K562 (cell line): ENCODE measurements at regions of chr1 and their contacts with region 1.

Region 1: GRCh38 chr1:207499573-207499972 is 3.6 kb downstream of the CR1 start:
- DNase-seq: peak; percentile 70 to 91 (median 76)
- ATAC-seq: peak; percentile 90
- H3K4me3 ChIP-seq: no peak overlapping the region
- H3K27ac ChIP-seq: peak overlapping the region; percentile 20; the same call in 1 of the 3 replicates
- H3K4me1 ChIP-seq: peaks cover 10 to 23% of the 10 kb centered on the region in 2 experiments
- H3K27me3 ChIP-seq: no peaks in the 10 kb centered on the region
- CTCF ChIP-seq: peak; percentile 86 to 97 (median 88)
- EP300 ChIP-seq: no peak; the same call in 1 of the 2 replicates
- POLR2A ChIP-seq: no peak
- RAD21 ChIP-seq: peak; percentile 96 to 98

Region 2: GRCh38 chr1:206912445-206913095 is 587.0 kb before region 1 on chr1:
- CTCF ChIA-PET with region 1: interaction called, 7 read pairs
- POLR2A ChIA-PET with region 1: no interaction called
- in situ Hi-C with region 1: no loop called
- intact Hi-C with region 1: loop called (anchors 5 kb)
- DNase-seq: peak; percentile 81 to 89 (median 84)
- ATAC-seq: peak; percentile 81
- H3K4me3 ChIP-seq: no peak overlapping the region
- H3K27ac ChIP-seq: no peak overlapping the region
- H3K4me1 ChIP-seq: peaks cover 4 to 12% of the 10 kb centered on the region in 2 experiments; a peak in 3 of 5 replicates
- H3K27me3 ChIP-seq: peaks cover 45 to 63% of the 10 kb centered on the region in 2 experiments
- CTCF ChIP-seq: peak; percentile 90 to 92 (median 92)
- EP300 ChIP-seq: no peak
- POLR2A ChIP-seq: no peak
- RAD21 ChIP-seq: peak; percentile 87 to 94

Region 3: GRCh38 chr1:207084701-207085180 is 414.8 kb before region 1 on chr1:
- CTCF ChIA-PET with region 1: interaction called, 5 read pairs
- POLR2A ChIA-PET with region 1: no interaction called
- in situ Hi-C with region 1: no loop called
- intact Hi-C with region 1: loop called (anchors 1 kb)
- DNase-seq: peak; percentile 77 to 95 (median 86)
- ATAC-seq: peak; percentile 98
- H3K4me3 ChIP-seq: no peak overlapping the region
- H3K27ac ChIP-seq: peak overlapping the region; percentile 20; the same call in 2 of the 3 replicates
- H3K4me1 ChIP-seq: peaks cover 0 to 15% of the 10 kb centered on the region in 2 experiments; a peak in 4 of 5 replicates
- H3K27me3 ChIP-seq: no peaks in the 10 kb centered on the region
- CTCF ChIP-seq: peak; percentile 86 to 87 (median 87)
- EP300 ChIP-seq: peak; percentile 75
- POLR2A ChIP-seq: no peak
- RAD21 ChIP-seq: peak; percentile 98 to 99

Region 4: DNA sequence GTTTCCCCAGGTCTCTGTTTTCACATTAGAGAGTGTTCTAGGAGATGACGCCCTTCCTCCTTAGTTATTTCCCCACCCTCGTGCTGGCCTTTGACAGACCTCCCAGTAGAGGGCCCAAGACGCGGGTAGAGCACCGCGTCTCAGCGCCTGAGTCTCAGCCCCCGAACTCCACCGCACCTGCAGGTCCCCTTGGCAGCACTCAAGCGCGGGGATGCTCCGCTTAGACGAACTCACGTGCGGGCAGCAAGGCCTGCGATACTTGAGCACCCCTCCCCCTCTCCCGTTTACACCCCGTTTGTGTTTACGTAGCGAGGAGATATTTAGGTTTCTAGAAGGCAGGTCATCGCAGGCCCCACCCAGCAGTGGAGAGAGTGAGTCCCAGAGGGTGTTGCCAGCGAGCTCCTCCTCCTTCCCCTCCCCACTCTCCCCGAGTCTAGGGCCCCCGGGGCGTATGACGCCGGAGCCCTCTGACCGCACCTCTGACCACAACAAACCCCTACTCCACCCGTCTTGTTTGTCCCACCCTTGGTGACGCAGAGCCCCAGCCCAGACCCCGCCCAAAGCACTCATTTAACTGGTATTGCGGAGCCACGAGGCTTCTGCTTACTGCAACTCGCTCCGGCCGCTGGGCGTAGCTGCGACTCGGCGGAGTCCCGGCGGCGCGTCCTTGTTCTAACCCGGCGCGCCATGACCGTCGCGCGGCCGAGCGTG is 178.3 kb before region 1 on chr1 and contains the start of gene CD55:
- CTCF ChIA-PET with region 1: no interaction called
- POLR2A ChIA-PET with region 1: interaction called, 4 read pairs
- in situ Hi-C with region 1: no loop called
- intact Hi-C with region 1: loop called (anchors 5 kb)
- DNase-seq: peak; percentile 97 to 100 (median 97)
- ATAC-seq: peak; percentile 95
- H3K4me3 ChIP-seq: peak within 1 kb of the TSS; percentile 91
- H3K27ac ChIP-seq: peak within 1 kb of the TSS; percentile 97
- H3K4me1 ChIP-seq: peaks cover 33 to 39% of the 10 kb centered on the region in 2 experiments
- H3K27me3 ChIP-seq: no peaks in the 10 kb centered on the region
- CTCF ChIP-seq: peak; percentile 60 to 74 (median 62)
- EP300 ChIP-seq: peak; percentile 66
- POLR2A ChIP-seq: peak; percentile 96
- RAD21 ChIP-seq: peak; percentile 38 to 45
- polyA plus RNA-seq, gene CD55: 17.7 to 29.4 TPM

Region 5: DNA sequence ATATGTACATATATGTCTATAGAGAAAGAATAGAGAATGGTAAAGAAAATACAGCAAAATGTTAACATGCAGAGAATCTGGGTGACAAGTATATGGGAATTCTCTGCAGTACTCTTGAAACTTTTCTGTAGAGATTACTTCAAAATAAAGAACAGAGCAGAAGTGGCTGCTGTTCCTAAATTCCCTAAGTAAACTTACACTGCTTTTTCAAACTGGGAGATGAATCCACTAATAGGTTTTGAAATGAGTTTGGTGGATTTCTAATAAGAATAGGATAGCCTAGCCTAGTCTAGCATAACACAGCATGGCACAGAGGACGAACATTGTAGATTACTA is 45.9 kb before region 1 on chr1:
- CTCF ChIA-PET with region 1: no interaction called
- POLR2A ChIA-PET with region 1: no interaction called
- in situ Hi-C with region 1: no loop called
- intact Hi-C with region 1: loop called (anchors 2 kb)
- DNase-seq: no peak
- ATAC-seq: no peak
- H3K4me3 ChIP-seq: 0 out of 2 replicates have a peak overlapping the region, but pooled peaks have one; percentile 28
- H3K27ac ChIP-seq: no peak overlapping the region
- H3K4me1 ChIP-seq: peaks cover 5 to 10% of the 10 kb centered on the region in 2 experiments; a peak in 4 of 5 replicates
- H3K27me3 ChIP-seq: no peaks in the 10 kb centered on the region
- CTCF ChIP-seq: no peak
- EP300 ChIP-seq: no peak
- POLR2A ChIP-seq: no peak
- RAD21 ChIP-seq: no peak

Region 6: DNA sequence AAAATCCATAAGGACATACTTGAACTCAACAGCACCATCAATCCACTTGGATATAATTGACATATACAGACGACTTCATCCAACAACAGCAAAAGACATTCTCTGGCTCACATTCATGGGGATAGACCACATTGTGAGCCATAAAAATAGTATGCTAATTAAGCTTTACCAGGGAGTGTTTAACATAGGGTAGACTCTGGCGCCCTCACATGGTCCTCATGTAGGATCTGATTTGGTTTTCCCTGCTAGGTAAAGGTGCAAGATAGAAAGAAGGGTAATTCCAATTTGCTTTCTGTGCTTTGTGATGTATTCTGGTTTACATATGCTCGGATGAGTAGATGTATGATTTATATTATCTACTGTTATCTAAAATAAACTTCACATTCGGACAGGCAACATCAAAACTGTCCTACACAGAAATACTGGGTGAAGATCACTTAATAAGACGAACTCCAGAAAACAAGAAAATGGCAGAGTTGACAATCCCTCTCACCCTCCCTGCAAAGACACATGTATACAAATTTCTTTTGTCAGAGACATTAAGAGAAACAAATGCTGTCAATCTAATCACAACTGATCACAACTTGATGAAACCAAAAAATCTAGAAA is 173.1 kb after region 1 on chr1:
- CTCF ChIA-PET with region 1: no interaction called
- POLR2A ChIA-PET with region 1: no interaction called
- in situ Hi-C with region 1: no loop called
- intact Hi-C with region 1: loop called (anchors 1 kb)
- DNase-seq: peak; percentile 48 to 79 (median 66)
- ATAC-seq: peak; percentile 87
- H3K4me3 ChIP-seq: no peak overlapping the region
- H3K27ac ChIP-seq: no peak overlapping the region
- H3K4me1 ChIP-seq: peaks cover 11 to 32% of the 10 kb centered on the region in 2 experiments; a peak in 4 of 5 replicates
- H3K27me3 ChIP-seq: no peaks in the 10 kb centered on the region
- CTCF ChIP-seq: peak; percentile 62 to 87 (median 78)
- EP300 ChIP-seq: no peak
- POLR2A ChIP-seq: no peak
- RAD21 ChIP-seq: peak; percentile 90 to 96